Naive thymus-derived CD4-positive, alpha-beta T cell (primary cell): ENCODE measurements at regions of chr12 and their contacts with region 1.

Region 1: GRCh38 chr12:111451649-111452129 is 46.0 kb downstream of the SH2B3 start:
- DNase-seq: peak in 7 of 9 donors; percentile 48 to 78 (median 73)
- ATAC-seq: peak; percentile 77
- H3K4me3 ChIP-seq: no peak overlapping the region
- H3K4me3 Mint-ChIP-seq: peak overlapping the region in 1 of 10 donors; percentile 13
- H3K27ac ChIP-seq: peak overlapping the region; percentile 12
- H3K27ac Mint-ChIP-seq: peak overlapping the region in 8 of 9 donors; percentile 0 to 81 (median 25)
- H3K4me1 ChIP-seq: peaks cover 6 to 17% of the 10 kb centered on the region in 2 donors
- H3K4me1 Mint-ChIP-seq: peaks cover 12 to 50% (median 29%) of the 10 kb centered on the region in 7 donors
- H3K27me3 ChIP-seq: no peaks in the 10 kb centered on the region
- H3K27me3 Mint-ChIP-seq: no peaks in the 10 kb centered on the region

Region 2: DNA sequence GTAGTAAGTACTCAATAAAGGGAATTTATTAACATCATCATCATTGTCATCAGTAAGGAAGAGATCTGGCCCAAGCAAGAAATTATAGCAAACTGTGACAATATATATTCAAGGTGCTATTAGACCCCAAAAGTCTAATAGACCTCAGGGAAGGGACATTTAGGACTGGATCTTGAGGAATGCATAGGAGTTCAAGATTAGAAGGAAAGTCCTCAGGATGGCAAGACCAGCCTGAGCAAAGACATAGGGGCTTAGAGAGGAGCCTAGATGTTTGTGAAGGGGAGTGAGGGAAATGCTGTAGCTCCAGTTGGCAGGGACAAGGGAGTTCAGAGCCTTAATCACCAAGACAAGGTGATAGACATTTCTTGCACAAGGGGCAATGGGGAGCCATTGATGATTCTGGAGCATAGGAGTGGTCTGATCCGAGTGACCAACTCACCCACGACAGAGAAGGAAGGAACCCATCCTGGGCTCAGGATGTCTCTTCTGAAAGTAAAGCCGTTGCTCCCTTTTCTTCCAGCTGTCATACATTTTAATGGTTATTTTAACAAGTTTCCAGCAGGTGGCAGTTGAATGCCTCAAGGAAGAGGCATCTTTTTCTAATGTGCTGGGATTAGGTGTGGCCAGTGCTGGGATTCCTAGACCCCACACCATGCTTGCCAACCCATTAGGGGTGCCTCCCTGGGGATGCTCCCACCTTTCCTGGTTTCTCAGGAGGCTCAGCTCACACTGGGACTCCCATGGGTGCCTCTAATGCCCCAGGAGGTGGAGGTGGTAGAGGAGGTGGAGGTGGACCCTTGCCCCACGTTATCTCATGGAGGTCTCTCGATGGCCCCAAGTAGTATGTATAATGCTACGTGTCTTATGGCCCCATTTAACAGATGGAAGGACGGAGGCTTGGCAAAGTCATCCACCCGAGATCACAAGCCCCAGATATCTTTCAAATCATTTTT is 120.6 kb before region 1 on chr12:
- CTCF ChIA-PET with region 1: no interaction called
- POLR2A ChIA-PET with region 1: no interaction called
- intact Hi-C with region 1: loop called (anchors 1 to 2 kb)
- DNase-seq: no peak
- ATAC-seq: peak; percentile 37
- H3K4me3 ChIP-seq: no peak overlapping the region
- H3K4me3 Mint-ChIP-seq: no peak overlapping the region
- H3K27ac ChIP-seq: no peak overlapping the region
- H3K27ac Mint-ChIP-seq: no peak overlapping the region
- H3K4me1 ChIP-seq: no peaks in the 10 kb centered on the region
- H3K4me1 Mint-ChIP-seq: peaks cover 0 to 10% (median 4%) of the 10 kb centered on the region in 7 donors
- H3K27me3 ChIP-seq: no peaks in the 10 kb centered on the region
- H3K27me3 Mint-ChIP-seq: peaks cover 0 to 5% (median 2%) of the 10 kb centered on the region in 5 donors

Region 3: GRCh38 chr12:111424793-111425251 is 26.9 kb before region 1 on chr12:
- CTCF ChIA-PET with region 1: interaction called, 16 read pairs
- POLR2A ChIA-PET with region 1: interaction called, 12 read pairs
- intact Hi-C with region 1: loop called in 1 of 2 experiments (anchors 1 kb)
- DNase-seq: no peak
- ATAC-seq: peak; percentile 52
- H3K4me3 ChIP-seq: no peak overlapping the region
- H3K4me3 Mint-ChIP-seq: peak overlapping the region in 6 of 10 donors; percentile 35 to 73 (median 64)
- H3K27ac ChIP-seq: peak overlapping the region; percentile 69
- H3K27ac Mint-ChIP-seq: peak overlapping the region; percentile 80 to 99 (median 93)
- H3K4me1 ChIP-seq: peaks cover 54 to 55% of the 10 kb centered on the region in 2 donors
- H3K4me1 Mint-ChIP-seq: peaks cover 39 to 69% (median 58%) of the 10 kb centered on the region in 7 donors
- H3K27me3 ChIP-seq: no peaks in the 10 kb centered on the region
- H3K27me3 Mint-ChIP-seq: no peaks in the 10 kb centered on the region

Region 4: GRCh38 chr12:111462210-111462769 is 10.6 kb after region 1 on chr12:
- CTCF ChIA-PET with region 1: interaction called, 17 read pairs
- POLR2A ChIA-PET with region 1: interaction called, 3 read pairs
- intact Hi-C with region 1: no loop called
- DNase-seq: no peak
- ATAC-seq: no peak
- H3K4me3 ChIP-seq: no peak overlapping the region
- H3K4me3 Mint-ChIP-seq: no peak overlapping the region
- H3K27ac ChIP-seq: no peak overlapping the region
- H3K27ac Mint-ChIP-seq: peak overlapping the region in 4 of 9 donors; percentile 6 to 82 (median 66)
- H3K4me1 ChIP-seq: no peaks in the 10 kb centered on the region
- H3K4me1 Mint-ChIP-seq: peaks cover 0 to 8% (median 0%) of the 10 kb centered on the region in 7 donors
- H3K27me3 ChIP-seq: no peaks in the 10 kb centered on the region
- H3K27me3 Mint-ChIP-seq: no peaks in the 10 kb centered on the region

Region 5: GRCh38 chr12:111505601-111506036 is 53.9 kb after region 1 on chr12:
- CTCF ChIA-PET with region 1: no interaction called
- POLR2A ChIA-PET with region 1: no interaction called
- intact Hi-C with region 1: no loop called
- DNase-seq: no peak
- ATAC-seq: peak; percentile 37
- H3K4me3 ChIP-seq: no peak overlapping the region
- H3K4me3 Mint-ChIP-seq: peak overlapping the region in 1 of 10 donors; percentile 35
- H3K27ac ChIP-seq: no peak overlapping the region
- H3K27ac Mint-ChIP-seq: peak overlapping the region in 3 of 9 donors; percentile 4 to 44 (median 28)
- H3K4me1 ChIP-seq: peaks cover 0 to 7% of the 10 kb centered on the region in 2 donors
- H3K4me1 Mint-ChIP-seq: peaks cover 0 to 14% (median 0%) of the 10 kb centered on the region in 7 donors
- H3K27me3 ChIP-seq: no peaks in the 10 kb centered on the region
- H3K27me3 Mint-ChIP-seq: no peaks in the 10 kb centered on the region

Region 6: DNA sequence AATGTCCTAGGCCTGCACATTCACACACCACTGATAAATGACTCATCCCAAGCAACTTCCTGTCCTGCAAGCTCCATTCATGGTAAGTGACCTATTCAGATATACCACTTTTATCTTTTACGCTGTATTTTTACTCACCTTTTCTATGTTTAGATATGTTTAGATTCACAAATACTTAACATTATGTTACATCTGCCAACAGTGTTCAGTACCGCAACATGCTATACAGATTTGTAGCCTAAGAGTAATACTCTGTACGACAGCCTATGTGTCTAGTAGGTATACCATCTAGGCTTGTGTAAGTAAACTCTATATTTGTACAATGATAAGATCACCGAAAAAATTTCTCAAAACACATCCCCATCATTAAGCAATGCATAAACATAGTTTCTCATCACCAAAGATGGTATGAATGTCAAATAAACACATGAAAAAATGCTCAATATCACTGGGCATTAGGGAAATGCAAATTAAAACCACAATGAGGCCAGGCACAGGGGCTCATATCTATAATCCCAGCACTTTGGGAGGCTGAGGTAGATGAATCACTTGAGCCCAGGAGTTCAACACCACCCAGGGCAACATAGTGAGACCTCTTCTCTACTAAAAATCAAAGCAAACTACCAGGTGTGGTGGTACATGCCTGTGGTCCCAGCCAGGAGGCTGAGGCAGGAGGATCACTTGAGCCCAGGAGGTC is 126.7 kb after region 1 on chr12:
- CTCF ChIA-PET with region 1: no interaction called
- POLR2A ChIA-PET with region 1: no interaction called
- intact Hi-C with region 1: no loop called
- DNase-seq: no peak
- ATAC-seq: peak; percentile 64
- H3K4me3 ChIP-seq: no peak overlapping the region
- H3K4me3 Mint-ChIP-seq: no peak overlapping the region
- H3K27ac ChIP-seq: no peak overlapping the region
- H3K27ac Mint-ChIP-seq: no peak overlapping the region
- H3K4me1 ChIP-seq: no peaks in the 10 kb centered on the region
- H3K4me1 Mint-ChIP-seq: peaks cover 9 to 23% (median 15%) of the 10 kb centered on the region in 7 donors
- H3K27me3 ChIP-seq: no peaks in the 10 kb centered on the region
- H3K27me3 Mint-ChIP-seq: no peaks in the 10 kb centered on the region

Region 7: GRCh38 chr12:111599459-111600204 is 147.9 kb after region 1 on chr12:
- CTCF ChIA-PET with region 1: no interaction called
- POLR2A ChIA-PET with region 1: no interaction called
- intact Hi-C with region 1: no loop called
- DNase-seq: peak; percentile 82 to 94 (median 87)
- ATAC-seq: peak; percentile 89
- H3K4me3 ChIP-seq: peak overlapping the region; percentile 80
- H3K4me3 Mint-ChIP-seq: peak overlapping the region; percentile 74 to 93 (median 86)
- H3K27ac ChIP-seq: peak overlapping the region; percentile 80
- H3K27ac Mint-ChIP-seq: peak overlapping the region; percentile 83 to 93 (median 89)
- H3K4me1 ChIP-seq: peaks cover 3 to 5% of the 10 kb centered on the region in 2 donors
- H3K4me1 Mint-ChIP-seq: peaks cover 22 to 39% (median 26%) of the 10 kb centered on the region in 7 donors
- H3K27me3 ChIP-seq: no peaks in the 10 kb centered on the region
- H3K27me3 Mint-ChIP-seq: no peaks in the 10 kb centered on the region

Region 8: DNA sequence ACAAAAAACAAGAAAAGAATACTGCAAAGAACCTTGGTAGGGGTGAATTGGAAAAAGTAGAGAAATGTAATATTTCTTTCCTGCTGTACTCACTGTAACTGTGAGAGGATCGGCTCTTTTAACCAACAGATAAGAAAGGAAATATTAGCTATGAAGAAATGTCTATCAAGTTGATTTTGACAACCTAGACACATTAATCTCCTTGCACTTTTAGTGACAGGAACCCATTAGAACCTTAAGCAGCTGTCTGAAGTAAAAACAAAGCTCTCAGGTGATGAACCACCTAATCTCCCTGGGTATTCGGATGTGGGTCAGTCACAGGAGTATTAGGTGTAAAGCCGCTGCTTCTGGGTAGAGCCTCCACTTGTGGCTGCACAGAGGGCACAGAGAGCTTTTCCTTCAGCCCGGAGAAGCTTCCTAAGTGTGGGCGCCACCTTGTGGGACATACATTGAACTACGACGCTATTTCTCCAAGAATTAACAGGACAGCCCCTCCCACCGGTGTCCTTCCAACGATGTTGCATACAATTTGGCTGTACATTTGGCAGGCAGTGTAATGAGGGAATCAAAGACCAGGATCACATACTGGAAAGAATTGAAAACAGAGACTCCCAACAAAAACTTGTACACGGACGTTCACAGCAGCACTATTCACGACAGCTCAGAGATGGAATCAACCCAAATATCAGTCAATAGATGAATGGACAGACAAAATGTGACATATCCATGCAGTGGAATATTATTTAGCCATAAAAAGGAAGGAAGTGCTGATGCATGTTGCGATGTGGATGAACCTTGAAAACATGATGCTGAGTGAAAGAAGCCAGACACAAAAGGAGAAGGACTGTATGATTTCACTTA is 361.4 kb after region 1 on chr12:
- CTCF ChIA-PET with region 1: no interaction called
- POLR2A ChIA-PET with region 1: no interaction called
- intact Hi-C with region 1: loop called in 1 of 2 experiments (anchors 5 kb)
- DNase-seq: peak; percentile 37 to 67 (median 57)
- ATAC-seq: peak; percentile 99
- H3K4me3 ChIP-seq: no peak overlapping the region
- H3K4me3 Mint-ChIP-seq: peak overlapping the region in 4 of 10 donors; percentile 5 to 39 (median 34)
- H3K27ac ChIP-seq: no peak overlapping the region
- H3K27ac Mint-ChIP-seq: peak overlapping the region in 2 of 9 donors; percentile 5 to 52
- H3K4me1 ChIP-seq: peaks cover 0 to 8% of the 10 kb centered on the region in 2 donors
- H3K4me1 Mint-ChIP-seq: peaks cover 5 to 11% (median 8%) of the 10 kb centered on the region in 7 donors
- H3K27me3 ChIP-seq: no peaks in the 10 kb centered on the region
- H3K27me3 Mint-ChIP-seq: peaks cover 0 to 12% (median 5%) of the 10 kb centered on the region in 5 donors